SK-N-SH (cell line): ENCODE measurements at regions of chr19 and their contacts with region 1.

Region 1: DNA sequence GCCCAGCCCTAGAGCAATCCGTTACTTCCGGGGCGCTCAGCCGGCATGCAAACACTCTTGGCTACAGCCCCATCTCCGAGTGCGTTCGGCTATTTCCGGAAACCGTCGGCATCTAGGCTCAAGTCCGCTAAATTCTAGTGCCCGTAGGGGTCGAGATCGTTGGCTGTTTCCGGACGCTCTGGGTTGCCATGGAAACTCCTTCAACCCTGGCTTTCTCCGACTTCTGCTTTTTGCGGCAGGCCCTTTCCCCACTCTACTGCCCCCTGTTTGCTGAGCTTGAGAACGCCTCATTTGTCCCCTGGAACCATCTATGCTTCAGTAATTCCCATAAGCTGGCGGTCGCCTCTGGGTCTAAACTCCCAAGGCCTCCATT is 533 bp upstream of the PIK3R2 start:
- DNase-seq: peak; percentile 96
- H3K4me3 ChIP-seq: peak overlapping the region; percentile 89 to 93
- H3K27ac ChIP-seq: peak overlapping the region; percentile 98 to 99
- H3K4me1 ChIP-seq: peaks cover 13 to 39% of the 10 kb centered on the region in 2 experiments; a peak in 2 of 4 replicates
- H3K27me3 ChIP-seq: no peaks in the 10 kb centered on the region
- CTCF ChIP-seq: peak; percentile 71
- EP300 ChIP-seq: no peak
- RAD21 ChIP-seq: peak; percentile 44

Region 2: GRCh38 chr19:18109733-18110595 is 42.5 kb before region 1 on chr19:
- CTCF ChIA-PET with region 1: interaction called, 18 read pairs
- POLR2A ChIA-PET with region 1: no interaction called
- DNase-seq: peak; percentile 83
- H3K4me3 ChIP-seq: peak overlapping the region; percentile 63 to 80
- H3K27ac ChIP-seq: peak overlapping the region in 1 of 2 experiments; percentile 43; a peak in 1 of 4 replicates
- H3K4me1 ChIP-seq: peaks cover 0 to 12% of the 10 kb centered on the region in 2 experiments; a peak in 1 of 4 replicates
- H3K27me3 ChIP-seq: no peaks in the 10 kb centered on the region
- CTCF ChIP-seq: no peak
- EP300 ChIP-seq: no peak
- RAD21 ChIP-seq: no peak

Region 3: DNA sequence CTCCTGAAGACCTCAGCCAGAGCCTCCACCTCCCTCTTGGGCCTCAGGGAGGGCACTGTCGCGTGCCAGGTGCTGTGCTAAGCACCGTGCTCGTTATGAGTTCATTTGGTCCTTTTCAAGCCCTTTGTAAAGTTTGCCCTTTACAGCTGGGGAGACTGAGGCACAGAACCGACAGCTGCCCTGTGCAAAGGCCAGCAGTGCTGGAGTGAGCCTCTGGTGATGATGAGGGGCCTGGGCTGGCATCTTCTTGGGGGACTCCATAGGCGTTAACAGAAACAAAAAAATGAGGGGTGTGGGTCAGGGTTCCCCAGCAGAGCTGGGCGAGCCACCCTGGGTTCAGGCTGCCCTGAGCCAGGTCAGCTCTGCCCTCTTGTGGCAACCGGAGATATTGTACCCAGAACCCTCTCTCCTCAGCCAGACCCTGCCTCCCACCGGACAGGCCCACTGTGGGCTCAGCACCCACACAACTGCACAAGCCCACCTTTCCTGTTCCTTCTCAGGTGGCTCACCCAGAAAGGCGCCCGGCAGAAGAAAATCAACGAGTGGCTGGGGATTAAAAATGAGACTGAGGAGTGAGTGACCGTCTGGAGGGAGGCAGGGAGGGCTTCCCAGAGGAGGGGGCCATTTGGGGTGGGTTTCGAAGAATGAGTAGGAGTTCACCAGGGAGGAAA is 15.7 kb after region 1 on chr19:
- CTCF ChIA-PET with region 1: interaction called, 11 read pairs
- POLR2A ChIA-PET with region 1: interaction called, 3 read pairs
- DNase-seq: peak; percentile 94
- H3K4me3 ChIP-seq: no peak overlapping the region
- H3K27ac ChIP-seq: no peak overlapping the region
- H3K4me1 ChIP-seq: no peaks in the 10 kb centered on the region; a peak in 1 of 4 replicates
- H3K27me3 ChIP-seq: no peaks in the 10 kb centered on the region
- CTCF ChIP-seq: peak; percentile 70
- EP300 ChIP-seq: no peak
- RAD21 ChIP-seq: peak; percentile 77

Region 4: GRCh38 chr19:18233224-18233825 is 80.9 kb after region 1 on chr19:
- CTCF ChIA-PET with region 1: no interaction called
- POLR2A ChIA-PET with region 1: no interaction called
- DNase-seq: peak; percentile 83
- H3K4me3 ChIP-seq: peak overlapping the region; percentile 35 to 42; a peak in 3 of 4 replicates
- H3K27ac ChIP-seq: no peak overlapping the region; a peak in 1 of 4 replicates
- H3K4me1 ChIP-seq: peaks cover 0 to 11% of the 10 kb centered on the region in 2 experiments; a peak in 1 of 4 replicates
- H3K27me3 ChIP-seq: no peaks in the 10 kb centered on the region
- CTCF ChIP-seq: no peak
- EP300 ChIP-seq: no peak
- RAD21 ChIP-seq: no peak